IMR-90 (cell line): ENCODE measurements at regions of chr9 and their contacts with region 1.

Region 1: DNA sequence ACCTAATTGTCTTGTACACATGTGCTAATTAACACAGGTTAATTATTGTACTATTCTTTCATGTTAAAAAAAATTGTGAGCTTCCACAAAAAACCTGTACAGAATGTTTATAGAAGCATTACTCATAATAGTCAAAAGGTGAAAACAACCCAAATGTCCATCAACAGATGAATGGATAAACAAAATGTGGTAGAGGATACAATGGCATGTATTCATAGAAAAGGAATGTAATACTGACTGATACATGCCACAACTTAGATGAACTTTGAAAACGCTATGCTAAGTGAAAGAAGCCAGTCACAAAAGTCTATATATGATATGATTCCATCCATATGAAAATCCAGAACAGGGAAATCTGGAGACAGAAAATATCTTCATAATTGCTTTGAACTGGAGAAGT is 25.6 kb downstream of the RRAGA start:
- DNase-seq: peak; percentile 22
- ATAC-seq: no peak
- H3K4me3 ChIP-seq: no peak overlapping the region
- H3K27ac ChIP-seq: no peak overlapping the region
- H3K4me1 ChIP-seq: peaks cover 2% of the 10 kb centered on the region; the same call in 1 of the 2 replicates
- H3K27me3 ChIP-seq: no peaks in the 10 kb centered on the region
- CTCF ChIP-seq: no peak
- POLR2A ChIP-seq: no peak
- RAD21 ChIP-seq: no peak

Region 2: GRCh38 chr9:19085295-19085694 is 10.5 kb after region 1 on chr9:
- CTCF ChIA-PET with region 1: interaction called, 3 read pairs
- POLR2A ChIA-PET with region 1: interaction called, 34 read pairs
- dilution Hi-C with region 1: no loop called
- in situ Hi-C with region 1: no loop called
- intact Hi-C with region 1: no loop called
- DNase-seq: no peak
- ATAC-seq: no peak
- H3K4me3 ChIP-seq: no peak overlapping the region
- H3K27ac ChIP-seq: no peak overlapping the region
- H3K4me1 ChIP-seq: no peaks in the 10 kb centered on the region
- H3K27me3 ChIP-seq: no peaks in the 10 kb centered on the region
- CTCF ChIP-seq: peak; percentile 19; the same call in 1 of the 2 replicates
- POLR2A ChIP-seq: no peak
- RAD21 ChIP-seq: no peak